ENCODE measurements at regions of chr17 and their contacts with region 1.

Region 1: DNA sequence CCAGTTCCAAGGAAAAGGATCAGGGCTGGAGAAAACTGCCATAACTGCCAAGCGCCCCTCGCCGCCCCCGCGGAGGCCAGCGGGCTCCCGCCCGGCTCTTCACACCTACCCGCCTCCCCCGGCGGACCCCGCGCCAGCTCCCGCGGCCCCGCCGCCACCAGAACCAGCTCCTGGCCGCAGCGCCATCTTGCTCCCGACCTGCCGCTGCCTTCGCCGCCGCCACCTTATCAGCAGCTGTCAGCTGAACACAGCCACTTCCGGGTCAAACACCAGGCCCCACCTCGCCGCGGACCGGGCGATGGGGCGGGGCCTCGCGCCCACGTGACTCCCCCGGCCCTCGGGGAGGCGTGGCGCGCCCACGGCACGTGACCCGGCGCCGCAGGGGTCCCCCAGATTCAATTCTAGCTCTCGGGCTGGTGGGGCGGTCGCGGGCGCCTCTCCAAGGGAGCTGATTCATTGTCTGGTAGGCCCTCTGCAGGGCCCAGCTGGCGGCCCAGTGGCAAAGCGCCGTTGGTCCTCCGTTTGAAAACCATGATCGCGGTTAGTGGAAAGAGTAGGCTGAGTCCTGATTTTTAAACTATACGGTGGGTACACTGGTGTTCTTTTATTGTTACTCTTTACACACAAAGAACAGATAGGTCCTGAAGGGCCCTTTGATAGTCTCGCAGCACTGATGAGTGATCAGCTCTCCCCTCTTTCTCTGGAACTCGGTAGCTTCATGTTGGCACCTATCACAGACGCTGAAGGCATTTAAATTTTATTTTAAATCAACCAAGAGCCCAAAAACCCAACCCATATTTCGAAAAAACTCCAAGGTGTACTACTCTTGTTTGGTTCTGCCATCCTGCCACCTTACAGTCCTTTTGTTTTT is at the start of gene SYNRG:
- ATAC-seq: peak; percentile 91 to 96 (median 95)
- H3K4me3 ChIP-seq: peak within 1 kb of the TSS; percentile 75 to 98 (median 91)
- H3K27ac ChIP-seq: peak within 1 kb of the TSS; percentile 95 to 98
- H3K4me1 ChIP-seq: peaks cover 4 to 6% of the 10 kb centered on the region in 2 donors
- total RNA-seq, gene SYNRG: 11.6 to 48.5 (median 27.7) TPM

Region 2: GRCh38 chr17:37358830-37359681 is 250.3 kb before region 1 on chr17:
- in situ Hi-C with region 1: no loop called
- ATAC-seq: peak; percentile 81 to 88 (median 85)
- H3K4me3 ChIP-seq: peak overlapping the region; percentile 49 to 69 (median 66)
- H3K27ac ChIP-seq: peak overlapping the region; percentile 80 to 84
- H3K4me1 ChIP-seq: peaks cover 15 to 21% of the 10 kb centered on the region in 2 donors

Region 3: DNA sequence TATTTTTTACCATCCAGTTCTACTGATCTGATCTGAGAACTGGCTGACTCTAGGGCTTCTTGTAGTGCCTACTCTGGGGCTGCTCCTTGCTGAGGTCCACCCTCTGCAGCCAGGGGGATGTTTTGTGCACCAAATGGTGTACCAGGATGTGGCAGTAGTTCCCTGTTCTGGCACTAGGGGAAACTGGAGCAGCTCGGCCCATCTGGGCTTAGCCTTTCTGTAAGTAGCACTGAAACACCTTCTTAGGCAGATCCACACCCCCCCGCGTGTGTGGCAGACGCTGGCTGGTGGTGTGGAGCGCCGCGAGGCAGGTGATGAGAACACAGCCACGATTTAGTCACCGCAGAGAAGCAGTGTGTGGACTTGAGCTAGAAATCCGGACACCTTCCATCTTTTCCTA is 102.7 kb before region 1 on chr17:
- in situ Hi-C with region 1: loop called in 1 of 9 experiments (anchors 25 kb)
- ATAC-seq: peak in 6 of 8 experiments; percentile 38 to 85 (median 76)
- H3K4me3 ChIP-seq: no peak overlapping the region
- H3K27ac ChIP-seq: no peak overlapping the region
- H3K4me1 ChIP-seq: no peaks in the 10 kb centered on the region

Measured in motor neuron (in vitro differentiated cells).